Right lobe of liver (tissue), 6 donors: ENCODE measurements at regions of chr15 and their contacts with region 1.

Region 1: GRCh38 chr15:83250801-83251200 is 33.7 kb downstream of the BNC1 start:
- DNase-seq: no peak
- ATAC-seq: no peak
- H3K4me3 ChIP-seq: no peak overlapping the region
- H3K27ac ChIP-seq: no peak overlapping the region
- H3K4me1 ChIP-seq: no peaks in the 10 kb centered on the region
- H3K27me3 ChIP-seq: peaks cover 0 to 5% of the 10 kb centered on the region in 2 donors
- CTCF ChIP-seq: no peak
- POLR2A ChIP-seq: no peak

Region 2: DNA sequence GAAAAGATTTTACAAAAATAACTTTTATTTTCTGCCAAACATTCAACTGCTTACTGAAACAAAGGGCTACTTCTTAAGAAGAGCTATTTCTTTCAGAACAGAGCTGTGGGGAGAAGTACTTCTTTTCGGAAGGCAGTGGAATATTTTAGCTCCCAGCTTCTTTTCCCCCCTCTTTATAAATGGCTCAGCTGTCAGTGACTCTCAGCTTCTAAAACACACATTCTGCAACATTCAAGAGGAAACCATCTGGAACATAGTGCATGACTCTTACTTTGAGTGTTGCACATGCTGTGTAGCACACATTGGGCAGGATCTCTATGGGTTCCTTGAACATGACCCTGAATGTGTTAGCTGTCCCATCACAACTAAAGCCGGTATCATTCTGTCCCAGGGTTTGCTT is 232.4 kb before region 1 on chr15:
- intact Hi-C with region 1: no loop called
- DNase-seq: no peak
- ATAC-seq: no peak
- H3K4me3 ChIP-seq: no peak overlapping the region
- H3K27ac ChIP-seq: no peak overlapping the region
- H3K4me1 ChIP-seq: no peaks in the 10 kb centered on the region
- H3K27me3 ChIP-seq: no peaks in the 10 kb centered on the region
- CTCF ChIP-seq: no peak
- POLR2A ChIP-seq: no peak

Region 3: DNA sequence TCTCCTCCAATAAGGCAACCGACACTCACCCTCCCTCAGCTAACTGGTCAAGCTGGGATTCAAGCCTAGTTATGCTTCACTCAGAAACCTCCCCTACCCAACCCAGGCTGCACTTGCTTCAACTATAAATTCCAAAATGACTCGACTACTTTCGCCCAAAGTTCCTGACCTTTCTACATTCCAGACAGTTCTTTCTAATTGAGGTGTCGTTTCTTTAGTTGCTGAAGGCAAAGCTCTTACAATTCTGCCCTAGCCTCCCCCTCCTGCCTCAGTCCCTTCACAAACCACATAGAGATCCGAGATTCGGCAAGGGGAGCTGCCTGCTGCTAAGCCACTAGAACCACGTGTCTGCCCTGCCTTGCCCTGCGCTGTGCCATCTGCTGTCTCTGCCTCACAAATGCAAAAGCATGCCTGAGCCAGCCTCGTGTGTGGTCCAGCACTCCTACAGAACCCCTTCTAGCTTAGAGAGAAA is 121.7 kb after region 1 on chr15:
- intact Hi-C with region 1: loop called in 1 of 2 experiments (anchors 10 kb)
- DNase-seq: no peak
- ATAC-seq: no peak
- H3K4me3 ChIP-seq: no peak overlapping the region
- H3K27ac ChIP-seq: no peak overlapping the region
- H3K4me1 ChIP-seq: no peaks in the 10 kb centered on the region
- H3K27me3 ChIP-seq: no peaks in the 10 kb centered on the region
- CTCF ChIP-seq: no peak
- POLR2A ChIP-seq: no peak